Common myeloid progenitor, CD34-positive (primary cell): ENCODE measurements at regions of chr1 and their contacts with region 1.

Region 1: GRCh38 chr1:187336441-187337168 is 507.9 kb downstream of the PLA2G4A start:
- DNase-seq: no peak
- H3K4me3 ChIP-seq: no peak overlapping the region
- H3K27ac ChIP-seq: no peak overlapping the region
- H3K4me1 ChIP-seq: no peaks in the 10 kb centered on the region
- H3K27me3 ChIP-seq: no peaks in the 10 kb centered on the region

Region 2: DNA sequence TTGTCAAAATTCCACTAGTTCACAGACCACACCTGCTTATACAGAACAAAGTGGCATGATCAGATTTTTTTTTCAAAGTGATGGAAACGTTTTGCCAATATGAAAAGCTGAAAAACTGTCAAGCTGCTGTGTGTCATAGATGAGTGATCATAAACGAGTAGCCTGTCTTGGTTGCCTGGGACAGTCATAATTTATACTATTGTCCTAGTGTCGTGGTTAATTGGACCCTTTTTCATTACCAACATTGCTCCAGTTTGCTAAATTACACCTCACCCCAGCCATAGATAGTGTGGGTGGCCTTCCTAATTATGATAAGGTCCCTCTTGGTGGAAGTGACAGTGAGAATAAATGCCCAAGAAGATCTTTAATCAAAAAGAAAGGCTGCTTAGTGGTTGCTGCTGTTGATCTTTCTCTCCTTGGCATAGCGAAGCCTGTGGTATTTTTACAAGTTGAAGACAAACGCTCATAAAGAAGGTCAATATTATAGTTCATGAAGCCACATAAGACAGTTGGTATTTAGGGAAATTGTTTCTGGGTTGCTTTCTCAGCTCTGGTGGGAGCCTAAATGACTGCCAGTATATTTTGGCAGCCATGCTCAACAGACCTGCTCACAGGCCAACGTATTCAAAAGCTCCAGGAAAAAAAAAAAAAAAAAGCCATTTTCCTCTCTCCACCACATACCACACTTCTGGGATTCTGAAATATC is 29.7 kb before region 1 on chr1:
- CTCF ChIA-PET with region 1: no interaction called
- POLR2A ChIA-PET with region 1: no interaction called
- DNase-seq: no peak
- H3K4me3 ChIP-seq: no peak overlapping the region
- H3K27ac ChIP-seq: no peak overlapping the region
- H3K4me1 ChIP-seq: no peaks in the 10 kb centered on the region
- H3K27me3 ChIP-seq: no peaks in the 10 kb centered on the region

Region 3: GRCh38 chr1:187359581-187359980 is 23.0 kb after region 1 on chr1:
- CTCF ChIA-PET with region 1: no interaction called
- POLR2A ChIA-PET with region 1: no interaction called
- DNase-seq: no peak
- H3K4me3 ChIP-seq: no peak overlapping the region
- H3K27ac ChIP-seq: no peak overlapping the region
- H3K4me1 ChIP-seq: no peaks in the 10 kb centered on the region
- H3K27me3 ChIP-seq: no peaks in the 10 kb centered on the region

Region 4: DNA sequence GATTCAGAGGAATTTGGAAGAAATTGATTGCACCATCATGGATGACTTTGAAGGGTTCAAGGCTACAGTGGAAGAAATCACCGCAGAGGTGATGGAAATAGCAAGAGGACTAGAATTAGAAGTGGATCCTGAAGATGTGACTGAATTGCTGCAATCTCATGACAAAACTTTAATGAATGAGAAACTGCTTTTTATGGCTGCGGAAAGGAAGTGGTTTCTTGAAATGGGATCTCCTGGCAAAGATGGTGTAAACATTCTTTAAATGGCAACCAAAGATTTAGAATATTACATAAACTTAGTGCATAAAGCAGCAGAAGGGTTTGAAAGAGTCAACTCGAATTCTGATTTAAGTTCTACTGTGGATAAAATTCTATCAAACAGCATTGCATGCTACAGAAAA is 190.7 kb after region 1 on chr1:
- CTCF ChIA-PET with region 1: no interaction called
- POLR2A ChIA-PET with region 1: no interaction called
- DNase-seq: no peak
- H3K4me3 ChIP-seq: no peak overlapping the region
- H3K27ac ChIP-seq: no peak overlapping the region
- H3K4me1 ChIP-seq: no peaks in the 10 kb centered on the region
- H3K27me3 ChIP-seq: no peaks in the 10 kb centered on the region

Region 5: GRCh38 chr1:188425687-188426086 is 1089.1 kb after region 1 on chr1:
- CTCF ChIA-PET with region 1: no interaction called
- POLR2A ChIA-PET with region 1: interaction called, 11 read pairs
- DNase-seq: peak in 1 of 3 donors; percentile 30
- H3K4me3 ChIP-seq: no peak overlapping the region
- H3K27ac ChIP-seq: no peak overlapping the region
- H3K4me1 ChIP-seq: peaks cover 0 to 7% (median 0%) of the 10 kb centered on the region in 4 experiments
- H3K27me3 ChIP-seq: no peaks in the 10 kb centered on the region